Esophagus muscularis mucosa (tissue), 4 donors: ENCODE measurements at regions of chr4 and their contacts with region 1.

Region 1: GRCh38 chr4:102439236-102439614 is 61.9 kb upstream of the NFKB1 start:
- DNase-seq: no peak
- H3K4me3 ChIP-seq: no peak overlapping the region
- H3K27ac ChIP-seq: peak overlapping the region; percentile 1 to 40 (median 33)
- H3K4me1 ChIP-seq: peaks cover 13 to 16% (median 15%) of the 10 kb centered on the region in 4 donors
- H3K27me3 ChIP-seq: no peaks in the 10 kb centered on the region
- CTCF ChIP-seq: no peak
- EP300 ChIP-seq: no peak
- POLR2A ChIP-seq: no peak

Region 2: GRCh38 chr4:101693842-101694398 is 745.3 kb before region 1 on chr4:
- intact Hi-C with region 1: no loop called
- DNase-seq: no peak
- H3K4me3 ChIP-seq: no peak overlapping the region
- H3K27ac ChIP-seq: no peak overlapping the region
- H3K4me1 ChIP-seq: no peaks in the 10 kb centered on the region
- H3K27me3 ChIP-seq: no peaks in the 10 kb centered on the region
- CTCF ChIP-seq: no peak
- EP300 ChIP-seq: no peak
- POLR2A ChIP-seq: no peak

Region 3: DNA sequence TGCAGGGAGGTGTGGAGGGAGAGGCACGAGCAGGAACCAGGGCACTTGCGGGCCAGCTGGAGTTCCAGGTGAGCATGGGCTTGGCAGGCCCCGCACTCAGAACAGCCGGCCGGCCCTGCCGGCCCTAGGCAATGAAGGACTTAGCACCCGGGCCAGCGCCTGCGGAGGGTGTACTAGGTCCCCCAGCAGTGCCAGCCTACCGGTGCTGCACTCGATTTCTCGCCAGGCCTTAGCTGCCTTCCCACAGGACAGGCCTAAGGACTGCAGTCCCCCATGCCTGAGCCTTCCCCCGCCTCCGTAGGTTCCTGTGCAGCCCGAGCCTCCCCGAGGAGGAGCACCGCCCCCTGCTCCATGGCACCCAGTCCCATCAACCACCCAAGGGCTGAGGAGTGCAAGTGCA is 43.9 kb after region 1 on chr4:
- intact Hi-C with region 1: no loop called
- DNase-seq: no peak
- H3K4me3 ChIP-seq: no peak overlapping the region
- H3K27ac ChIP-seq: no peak overlapping the region
- H3K4me1 ChIP-seq: no peaks in the 10 kb centered on the region
- H3K27me3 ChIP-seq: no peaks in the 10 kb centered on the region
- CTCF ChIP-seq: no peak
- EP300 ChIP-seq: no peak
- POLR2A ChIP-seq: no peak

Region 4: GRCh38 chr4:102500696-102501446 is 61.6 kb after region 1 on chr4 and contains the start of gene NFKB1:
- intact Hi-C with region 1: loop called (anchors 5 kb)
- DNase-seq: no peak
- H3K4me3 ChIP-seq: peak within 1 kb of the TSS; percentile 78 to 94 (median 88)
- H3K27ac ChIP-seq: peak within 1 kb of the TSS; percentile 91 to 98 (median 98)
- H3K4me1 ChIP-seq: peaks cover 32 to 49% (median 47%) of the 10 kb centered on the region in 4 donors
- H3K27me3 ChIP-seq: no peaks in the 10 kb centered on the region
- CTCF ChIP-seq: no peak
- EP300 ChIP-seq: no peak
- POLR2A ChIP-seq: no peak
- total RNA-seq, gene NFKB1: 31.6 to 42.1 (median 39.7) TPM

Region 5: GRCh38 chr4:102687373-102687981 is 248.3 kb after region 1 on chr4:
- intact Hi-C with region 1: no loop called
- DNase-seq: no peak
- H3K4me3 ChIP-seq: no peak overlapping the region
- H3K27ac ChIP-seq: no peak overlapping the region
- H3K4me1 ChIP-seq: peaks cover 0 to 7% (median 3%) of the 10 kb centered on the region in 4 donors
- H3K27me3 ChIP-seq: no peaks in the 10 kb centered on the region
- CTCF ChIP-seq: no peak
- EP300 ChIP-seq: no peak
- POLR2A ChIP-seq: no peak